ENCODE measurements at regions of chr2 and their contacts with region 1.

Region 1: GRCh38 chr2:205776139-205776538 is 93.8 kb downstream of the NRP2 start:
- DNase-seq: peak; percentile 26 to 64
- ATAC-seq: peak; percentile 67 to 70 (median 68)
- H3K4me3 ChIP-seq: no peak overlapping the region
- H3K27ac ChIP-seq: no peak overlapping the region
- H3K4me1 ChIP-seq: no peaks in the 10 kb centered on the region
- H3K27me3 ChIP-seq: peaks cover 0 to 7% (median 2%) of the 10 kb centered on the region in 3 donors
- CTCF ChIP-seq: peak; percentile 70

Region 2: DNA sequence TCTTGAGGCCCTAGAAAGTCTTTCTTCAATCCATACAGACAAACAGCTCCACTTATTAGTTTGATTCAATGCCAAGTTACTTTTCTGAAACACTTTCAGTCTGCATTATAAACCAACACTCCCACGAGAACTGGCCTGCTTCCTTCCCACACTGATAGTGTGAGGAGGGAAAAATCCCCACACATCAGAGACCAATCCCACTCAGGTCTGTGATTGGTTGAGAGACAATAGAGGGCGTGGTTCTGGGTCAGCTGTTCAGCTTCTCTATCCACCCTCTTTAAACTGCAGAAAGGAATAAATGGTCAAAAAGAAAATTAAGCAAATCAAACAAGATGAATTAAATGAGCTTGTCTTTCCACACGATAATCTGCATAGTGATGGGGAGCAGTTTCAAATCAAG is 58.7 kb after region 1 on chr2:
- intact Hi-C with region 1: no loop called
- DNase-seq: no peak
- ATAC-seq: no peak
- H3K4me3 ChIP-seq: no peak overlapping the region
- H3K27ac ChIP-seq: no peak overlapping the region
- H3K4me1 ChIP-seq: no peaks in the 10 kb centered on the region
- H3K27me3 ChIP-seq: peaks cover 0 to 4% (median 0%) of the 10 kb centered on the region in 3 donors
- CTCF ChIP-seq: no peak

Region 3: GRCh38 chr2:205885492-205886099 is 109.5 kb after region 1 on chr2:
- intact Hi-C with region 1: loop called (anchors 2 to 5 kb)
- DNase-seq: peak; percentile 78 to 91
- ATAC-seq: peak; percentile 73 to 83 (median 82)
- H3K4me3 ChIP-seq: no peak overlapping the region
- H3K27ac ChIP-seq: no peak overlapping the region
- H3K4me1 ChIP-seq: no peaks in the 10 kb centered on the region
- H3K27me3 ChIP-seq: peaks cover 0 to 1% (median 0%) of the 10 kb centered on the region in 3 donors
- CTCF ChIP-seq: peak; percentile 79

Region 4: GRCh38 chr2:205925373-205926337 is 149.5 kb after region 1 on chr2:
- intact Hi-C with region 1: loop called in 1 of 2 experiments (anchors 5 kb)
- DNase-seq: peak; percentile 75 to 86
- ATAC-seq: peak; percentile 70 to 88 (median 82)
- H3K4me3 ChIP-seq: peak overlapping the region; percentile 51
- H3K27ac ChIP-seq: no peak overlapping the region
- H3K4me1 ChIP-seq: peaks cover 4% of the 10 kb centered on the region
- H3K27me3 ChIP-seq: peaks cover 0 to 31% (median 0%) of the 10 kb centered on the region in 3 donors
- CTCF ChIP-seq: peak; percentile 88

Region 5: DNA sequence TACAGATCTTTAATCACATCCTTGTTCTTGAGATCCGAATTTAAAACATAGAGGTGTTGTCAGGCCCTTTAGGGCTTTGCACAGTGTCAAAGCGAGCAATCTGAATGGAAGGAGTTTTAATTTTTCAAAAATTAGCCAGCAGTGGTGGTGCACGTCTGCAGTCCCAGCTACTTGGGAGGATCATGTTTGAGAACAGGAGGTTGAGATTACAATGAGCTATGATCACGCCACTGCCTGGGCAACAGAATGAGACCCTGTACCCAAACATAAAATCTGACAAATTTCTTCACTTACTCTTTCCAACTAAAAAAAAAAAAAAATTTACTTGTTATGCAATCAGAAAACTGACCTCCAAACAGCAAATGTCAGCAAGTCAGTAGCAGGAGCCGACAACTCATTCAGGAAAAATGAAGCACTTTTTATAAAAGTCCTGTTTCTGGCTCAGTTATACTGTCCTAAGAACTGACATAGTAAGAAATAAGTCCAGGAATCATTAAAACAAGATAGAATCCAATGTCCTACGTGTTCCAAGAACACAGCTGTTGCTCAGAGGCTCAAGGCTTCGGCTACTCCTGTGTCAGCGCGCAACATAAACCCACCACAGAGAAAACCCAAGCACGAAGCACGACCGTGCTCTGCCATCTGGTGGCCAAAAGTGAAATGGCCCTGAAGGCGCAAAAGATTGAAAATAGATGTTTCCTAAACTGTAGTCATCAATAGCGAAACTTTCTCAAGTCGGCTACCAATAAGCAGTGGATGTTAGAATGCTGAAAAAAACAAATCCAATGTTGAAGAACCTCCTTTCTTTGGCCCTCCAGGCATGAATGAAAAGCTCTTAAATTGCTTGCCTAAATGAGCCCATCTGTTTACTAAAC is 171.7 kb after region 1 on chr2:
- intact Hi-C with region 1: loop called in 1 of 2 experiments (anchors 5 kb)
- DNase-seq: peak; percentile 59 to 78
- ATAC-seq: peak; percentile 85 to 95 (median 89)
- H3K4me3 ChIP-seq: peak overlapping the region; percentile 46
- H3K27ac ChIP-seq: no peak overlapping the region
- H3K4me1 ChIP-seq: no peaks in the 10 kb centered on the region
- H3K27me3 ChIP-seq: no peaks in the 10 kb centered on the region
- CTCF ChIP-seq: peak; percentile 90